Activated CD4-positive, alpha-beta T cell treated with anti-CD3 and anti-CD28 coated beads for 36 hours (primary cell): ENCODE measurements at regions of chr19 and their contacts with region 1.

Region 1: DNA sequence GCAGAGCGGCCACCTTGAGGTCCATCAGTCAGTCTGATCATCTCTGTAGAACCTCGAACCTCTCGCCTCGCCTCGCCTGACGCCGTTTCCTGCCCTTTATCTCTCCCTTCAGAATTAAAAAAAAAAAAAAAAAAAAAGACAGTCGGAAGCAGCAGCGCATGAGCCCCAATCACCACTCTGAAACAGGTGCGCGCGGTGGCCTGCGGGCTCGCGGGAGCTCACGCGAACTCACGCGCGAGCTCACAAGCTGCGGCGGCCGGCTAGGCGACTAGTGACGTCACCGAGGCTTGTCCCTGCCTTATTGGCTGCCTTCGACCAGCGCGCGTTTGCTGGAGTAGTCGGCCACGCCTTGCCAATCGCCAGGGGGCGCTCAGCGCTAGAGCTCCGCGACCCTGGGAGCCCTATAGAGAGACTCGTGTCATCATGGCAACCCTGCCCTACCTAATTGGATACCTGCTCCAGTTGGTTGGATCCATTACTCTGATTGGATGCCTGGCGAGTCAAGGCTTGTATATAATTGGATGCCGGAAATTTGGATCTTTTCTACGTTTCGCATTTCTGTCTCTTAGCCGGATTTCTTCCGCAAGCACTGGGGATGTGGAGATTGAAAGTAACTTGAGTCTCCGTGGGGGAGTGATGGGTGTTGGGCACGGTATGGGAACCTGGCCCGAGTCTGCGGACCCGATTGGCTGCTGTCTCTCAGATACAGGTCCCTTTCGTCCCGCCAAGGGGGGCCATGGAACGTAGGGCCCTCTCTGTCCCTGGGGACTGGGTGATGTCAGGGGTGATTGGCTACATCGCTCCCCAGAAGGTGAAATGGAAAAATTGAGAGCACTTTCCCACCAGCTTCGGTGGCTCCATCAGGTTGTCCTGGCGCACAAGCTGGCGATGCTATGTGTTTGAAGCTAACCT is 31.6 kb downstream of the SYT3 start:
- DNase-seq: peak; percentile 95
- ATAC-seq: peak; percentile 93
- H3K4me3 Mint-ChIP-seq: peak overlapping the region; percentile 5
- H3K27ac Mint-ChIP-seq: no peak overlapping the region
- H3K4me1 Mint-ChIP-seq: peaks cover 13% of the 10 kb centered on the region
- H3K27me3 Mint-ChIP-seq: peaks cover 35% of the 10 kb centered on the region

Region 2: DNA sequence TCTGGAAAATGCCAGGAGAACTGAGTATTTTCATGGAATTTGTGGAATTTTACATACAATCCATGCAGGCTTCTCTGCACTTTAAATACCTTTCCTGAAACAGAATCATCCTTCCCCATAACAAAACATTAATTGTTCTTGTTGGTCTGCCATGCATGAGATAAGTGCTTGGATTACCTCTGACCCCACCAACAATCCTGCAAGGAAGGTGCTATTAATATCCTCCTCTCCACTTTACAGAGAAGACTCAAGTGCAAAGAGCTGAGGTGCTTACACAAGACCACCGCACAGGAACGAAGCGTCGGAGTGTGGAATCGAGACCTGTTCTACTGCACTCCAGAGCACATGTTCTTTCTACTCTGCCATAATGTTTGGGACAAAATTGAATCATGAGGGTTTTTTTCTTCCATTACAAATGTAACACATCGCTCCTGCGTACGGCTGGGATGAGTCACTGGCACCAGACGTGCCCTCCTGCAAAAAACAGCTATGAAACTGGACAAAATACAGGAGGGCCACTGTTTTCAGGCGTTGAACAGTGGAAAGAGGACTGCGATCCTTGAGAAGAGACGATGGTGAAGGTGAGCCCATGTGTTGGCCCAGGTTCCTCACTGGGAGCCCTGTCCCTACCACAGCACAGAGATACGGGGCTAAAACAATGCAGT is 27.0 kb before region 1 on chr19:
- CTCF ChIA-PET with region 1: no interaction called
- POLR2A ChIA-PET with region 1: no interaction called
- intact Hi-C with region 1: no loop called
- DNase-seq: no peak
- ATAC-seq: no peak
- H3K4me3 Mint-ChIP-seq: no peak overlapping the region
- H3K27ac Mint-ChIP-seq: no peak overlapping the region
- H3K4me1 Mint-ChIP-seq: no peaks in the 10 kb centered on the region
- H3K27me3 Mint-ChIP-seq: peaks cover 16% of the 10 kb centered on the region

Region 3: DNA sequence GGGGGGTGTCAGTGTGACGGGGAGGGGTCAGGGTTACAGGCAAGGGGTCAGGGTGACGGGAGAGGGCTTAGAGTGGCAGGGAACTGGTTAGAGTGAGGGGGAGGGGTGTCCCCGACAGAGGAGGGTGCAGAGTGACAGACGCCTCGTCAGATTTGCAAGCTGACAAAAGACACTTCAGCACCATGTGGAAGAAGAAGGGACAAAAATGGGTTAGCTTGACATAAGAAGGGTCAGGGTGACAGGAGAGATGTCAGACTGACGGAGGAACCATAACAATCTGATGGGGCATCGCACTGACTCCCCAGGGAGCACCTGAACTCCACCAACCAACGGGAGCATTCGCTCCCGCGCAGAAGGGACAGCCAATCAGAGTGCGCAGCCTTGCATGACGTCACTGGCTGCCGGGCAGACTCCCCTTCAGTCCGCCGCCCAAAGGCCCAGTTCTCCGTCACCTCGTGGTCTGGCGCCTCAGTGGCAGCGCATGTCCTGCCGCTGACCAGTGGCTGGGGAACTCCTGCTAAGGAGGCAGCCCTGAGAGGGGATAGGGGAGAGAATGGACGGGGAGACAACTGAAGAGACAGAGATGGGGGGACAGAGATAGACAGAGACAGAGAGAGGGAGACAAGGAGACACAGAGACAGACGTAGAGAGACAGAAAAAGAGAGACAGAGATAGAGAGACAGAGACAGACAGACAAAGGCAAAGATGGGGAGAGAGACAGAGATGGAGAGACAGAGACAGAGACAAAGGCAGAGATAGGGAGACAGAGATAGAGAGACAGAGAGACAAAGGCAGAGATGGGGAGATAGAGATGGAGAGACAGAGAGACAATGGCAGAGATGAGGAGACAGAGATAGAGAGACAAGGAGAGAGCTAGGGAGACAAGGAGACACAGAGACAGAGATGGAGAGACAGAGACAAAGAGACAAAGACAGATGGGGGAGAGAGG is 71.3 kb after region 1 on chr19:
- CTCF ChIA-PET with region 1: interaction called, 4 read pairs
- POLR2A ChIA-PET with region 1: no interaction called
- intact Hi-C with region 1: loop called in 1 of 2 experiments (anchors 2 kb)
- DNase-seq: peak; percentile 91
- ATAC-seq: peak; percentile 98
- H3K4me3 Mint-ChIP-seq: no peak overlapping the region
- H3K27ac Mint-ChIP-seq: no peak overlapping the region
- H3K4me1 Mint-ChIP-seq: peaks cover 8% of the 10 kb centered on the region
- H3K27me3 Mint-ChIP-seq: peaks cover 36% of the 10 kb centered on the region